Panc1 (cell line): ENCODE measurements at regions of chr20 and their contacts with region 1.

Region 1: GRCh38 chr20:25294459-25295385 is 46.8 kb downstream of the PYGB start:
- DNase-seq: no peak
- ATAC-seq: peak; percentile 53
- H3K4me3 ChIP-seq: no peak overlapping the region
- H3K27ac ChIP-seq: peak overlapping the region; percentile 70
- H3K4me1 ChIP-seq: peaks cover 52% of the 10 kb centered on the region
- H3K27me3 ChIP-seq: no peaks in the 10 kb centered on the region
- CTCF ChIP-seq: peak; percentile 94

Region 2: GRCh38 chr20:25281541-25281991 is 13.2 kb before region 1 on chr20:
- CTCF ChIA-PET with region 1: no interaction called
- POLR2A ChIA-PET with region 1: no interaction called
- in situ Hi-C with region 1: no loop called
- intact Hi-C with region 1: no loop called
- DNase-seq: no peak
- ATAC-seq: no peak
- H3K4me3 ChIP-seq: no peak overlapping the region
- H3K27ac ChIP-seq: no peak overlapping the region
- H3K4me1 ChIP-seq: peaks cover 7% of the 10 kb centered on the region; the same call in 1 of the 2 replicates
- H3K27me3 ChIP-seq: no peaks in the 10 kb centered on the region
- CTCF ChIP-seq: no peak

Region 3: DNA sequence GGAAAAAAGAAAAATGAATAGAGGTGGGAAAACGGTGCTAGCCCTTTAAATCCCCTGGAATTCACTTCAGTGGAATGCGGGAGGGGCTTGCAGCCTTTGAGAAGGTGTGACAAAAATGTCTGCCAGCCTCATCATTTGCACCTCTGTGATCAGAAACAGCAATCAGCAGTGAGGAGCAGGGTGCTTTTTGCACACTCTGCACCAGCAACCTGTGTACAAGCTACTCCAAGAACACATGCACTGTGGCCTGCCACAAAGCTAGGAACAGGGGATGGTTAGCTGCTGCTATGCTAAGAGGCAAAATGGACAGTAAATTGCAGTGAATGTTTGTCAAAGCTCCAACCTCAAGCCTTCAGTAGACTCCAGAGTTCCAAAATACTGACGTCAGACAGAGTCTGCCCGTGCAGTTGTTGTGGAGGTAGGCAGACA is 142.4 kb after region 1 on chr20:
- CTCF ChIA-PET with region 1: no interaction called
- POLR2A ChIA-PET with region 1: interaction called, 10 read pairs
- in situ Hi-C with region 1: no loop called
- intact Hi-C with region 1: no loop called
- DNase-seq: no peak
- ATAC-seq: no peak
- H3K4me3 ChIP-seq: no peak overlapping the region
- H3K27ac ChIP-seq: no peak overlapping the region
- H3K4me1 ChIP-seq: no peaks in the 10 kb centered on the region
- H3K27me3 ChIP-seq: no peaks in the 10 kb centered on the region
- CTCF ChIP-seq: no peak